Activated B cell treated with CpG ODN at 0.5 μM for 24 hours (primary cell): ENCODE measurements at regions of chr5 and their contacts with region 1.

Region 1: DNA sequence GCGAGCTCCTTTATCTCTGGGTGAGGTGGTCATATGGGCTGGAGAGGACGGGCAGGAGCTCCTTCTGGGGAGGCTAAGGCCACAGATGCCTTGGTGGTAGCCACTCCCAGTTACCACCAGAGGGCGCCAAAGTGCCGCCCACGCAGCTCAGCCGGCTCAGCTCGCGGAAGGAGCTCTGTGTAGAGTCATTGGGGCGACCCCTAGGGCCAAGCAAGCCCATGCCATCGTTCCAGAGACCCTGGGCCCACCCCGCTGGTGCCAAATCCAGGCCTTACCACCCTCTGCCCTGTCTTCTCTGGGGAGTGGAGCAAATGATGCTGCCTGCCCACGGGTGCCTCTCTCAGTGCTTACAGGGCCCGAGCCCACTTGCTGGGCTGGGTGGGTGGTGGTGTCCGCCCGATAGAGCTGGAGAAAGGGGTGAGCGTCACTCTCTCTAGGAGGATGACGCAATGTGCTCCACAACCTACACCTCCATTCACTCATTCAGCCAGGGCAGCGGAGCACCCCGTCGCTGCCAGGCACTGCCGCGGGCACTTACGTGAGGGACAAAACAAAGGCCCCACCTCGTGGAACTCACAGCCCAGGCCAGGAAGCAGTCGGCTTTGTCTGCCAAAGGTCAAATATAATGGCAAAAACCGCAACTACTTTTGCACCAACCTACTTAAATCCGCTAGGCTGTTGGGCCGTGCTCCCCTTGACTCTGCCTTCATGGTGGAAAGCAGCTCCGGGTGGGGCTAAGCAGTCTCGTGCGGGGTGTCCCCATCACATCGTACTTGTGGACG is 13.8 kb downstream of the TSPAN17 start:
- DNase-seq: peak; percentile 72
- ATAC-seq: peak; percentile 84
- H3K4me3 Mint-ChIP-seq: no peak overlapping the region
- H3K27ac Mint-ChIP-seq: no peak overlapping the region
- H3K4me1 Mint-ChIP-seq: peaks cover 29% of the 10 kb centered on the region
- H3K27me3 Mint-ChIP-seq: peaks cover 18% of the 10 kb centered on the region
- CTCF ChIP-seq: no peak

Region 2: DNA sequence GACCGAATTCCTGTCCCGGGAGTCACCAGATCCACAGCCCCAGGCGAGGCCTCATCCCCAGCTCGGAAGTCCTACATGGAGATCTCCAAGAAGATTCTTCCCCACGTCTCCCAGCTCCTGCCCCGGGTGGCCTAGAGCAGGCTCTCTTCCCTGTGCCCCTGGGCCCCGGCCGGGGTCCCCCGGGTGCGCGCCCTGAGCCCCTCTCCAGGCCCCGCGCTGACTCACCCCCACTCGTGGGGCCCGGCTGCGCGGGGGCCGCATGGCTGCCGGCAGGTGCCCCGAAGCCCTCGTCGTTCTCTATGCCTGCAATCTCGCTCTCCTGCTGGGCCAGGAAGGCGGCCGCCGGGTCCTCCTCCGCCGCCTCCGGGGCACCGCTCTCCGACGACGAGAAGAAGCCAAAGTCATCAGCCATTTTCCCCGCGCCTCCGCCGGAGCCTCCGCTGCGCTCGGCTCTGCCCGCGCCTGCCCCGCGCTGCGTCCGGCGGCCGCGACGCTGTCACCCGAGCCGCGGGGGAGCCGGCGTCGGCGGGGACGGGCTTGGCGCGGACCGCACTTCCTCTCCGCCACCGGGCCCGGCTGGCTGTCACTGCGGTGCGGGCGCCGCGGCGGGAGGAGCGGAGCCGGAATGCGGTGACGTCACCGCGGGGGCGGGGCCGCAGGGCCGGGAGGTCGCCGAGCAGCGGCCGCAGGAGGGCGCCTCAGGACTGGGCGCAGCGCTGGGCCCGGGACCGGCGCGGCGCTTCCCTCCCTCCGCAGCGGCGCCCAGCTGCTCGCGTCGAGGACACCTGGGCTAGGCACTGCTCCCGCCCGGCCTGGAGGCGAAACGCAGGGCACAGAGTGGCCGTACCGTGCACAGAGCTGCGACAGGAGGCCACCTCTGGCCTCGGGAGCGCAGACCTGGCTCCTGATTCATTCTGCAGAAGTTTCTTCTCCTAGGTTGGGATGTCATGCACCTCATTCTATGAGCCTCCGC is 244.8 kb before region 1 on chr5 and contains the start of gene CLTB:
- CTCF ChIA-PET with region 1: interaction called, 5 read pairs
- POLR2A ChIA-PET with region 1: no interaction called
- intact Hi-C with region 1: loop called (anchors 1 kb)
- DNase-seq: peak; percentile 80
- ATAC-seq: peak; percentile 97
- H3K4me3 Mint-ChIP-seq: peak within 1 kb of the TSS; percentile 80
- H3K27ac Mint-ChIP-seq: peak within 1 kb of the TSS; percentile 56
- H3K4me1 Mint-ChIP-seq: peaks cover 26% of the 10 kb centered on the region
- H3K27me3 Mint-ChIP-seq: peaks cover 8% of the 10 kb centered on the region
- CTCF ChIP-seq: no peak
- total RNA-seq, gene CLTB: 29.5 and 48.9 TPM in 2 replicates

Region 3: DNA sequence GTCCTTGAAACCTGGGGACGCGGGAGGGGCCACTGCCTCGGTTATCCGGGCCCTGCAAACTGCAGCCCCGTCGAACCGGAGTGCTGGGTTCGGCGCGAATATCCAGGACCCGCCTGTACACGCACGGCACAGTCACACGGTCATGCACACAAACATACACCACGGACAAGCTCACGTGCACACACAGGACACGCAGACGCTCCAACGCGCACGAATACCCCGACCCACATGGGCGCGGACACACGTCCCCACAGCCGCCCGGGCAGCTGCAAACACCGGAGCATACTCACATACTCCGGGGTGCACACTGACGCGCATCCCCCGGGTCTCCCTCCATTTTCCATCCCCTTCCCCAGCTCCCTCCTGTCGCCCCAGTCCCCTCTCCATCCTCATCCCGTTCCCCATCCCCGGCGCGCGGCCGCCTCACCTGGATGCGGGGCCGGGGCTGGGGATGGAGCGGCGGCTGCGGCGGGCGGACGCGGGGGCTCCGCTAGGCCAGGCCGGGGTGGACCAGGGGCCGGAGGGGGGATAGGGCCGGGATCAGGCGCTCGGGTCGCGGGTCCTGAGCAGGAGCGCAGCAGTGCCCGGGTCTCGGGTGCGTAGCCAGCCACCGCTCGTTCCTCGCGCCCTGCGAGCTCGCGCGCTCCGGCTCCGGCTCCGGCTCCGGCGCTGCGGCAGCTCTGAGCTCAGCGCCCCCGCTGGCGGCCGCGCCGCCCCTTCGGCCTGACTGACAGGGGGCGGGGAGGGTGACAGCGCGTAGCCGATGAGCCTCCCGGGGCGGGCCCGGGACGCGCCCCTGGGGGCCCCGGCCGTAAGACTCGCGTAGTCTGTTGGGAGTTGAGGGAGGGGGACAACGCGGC is 31.0 kb before region 1 on chr5 and contains the starts of genes EIF4E1B and SNCB:
- CTCF ChIA-PET with region 1: interaction called, 10 read pairs
- POLR2A ChIA-PET with region 1: interaction called, 6 read pairs
- intact Hi-C with region 1: no loop called
- DNase-seq: peak; percentile 69
- ATAC-seq: peak; percentile 97
- H3K4me3 Mint-ChIP-seq: peak within 1 kb of the TSS; percentile 77
- H3K27ac Mint-ChIP-seq: no peak within 1 kb of the TSS
- H3K4me1 Mint-ChIP-seq: peaks cover 51% of the 10 kb centered on the region
- H3K27me3 Mint-ChIP-seq: peaks cover 28% of the 10 kb centered on the region
- CTCF ChIP-seq: no peak
- total RNA-seq, gene EIF4E1B: not detected in 2 replicates
- total RNA-seq, gene SNCB: 0.17 TPM in 1 of 2 replicates, not detected in the other

Region 4: DNA sequence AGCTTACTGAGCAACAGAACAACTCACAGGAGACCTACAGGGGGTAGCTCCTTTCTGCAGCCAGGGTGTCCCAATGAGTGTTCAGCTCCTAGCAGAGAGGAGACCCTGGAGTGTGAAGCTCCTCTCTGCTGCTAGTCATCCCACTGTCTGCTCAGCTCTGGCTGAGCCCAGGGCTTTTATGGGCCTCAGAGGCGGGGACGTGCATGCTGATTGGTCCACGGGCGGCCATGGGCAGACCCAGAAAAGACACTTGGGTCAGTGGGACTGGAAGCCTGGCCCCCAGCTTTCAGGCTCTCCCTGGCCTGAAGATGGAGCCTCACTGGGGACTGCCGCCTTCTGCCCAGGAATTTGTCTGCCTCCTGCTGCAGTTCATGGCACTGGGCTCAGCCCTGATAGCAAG is 26.8 kb after region 1 on chr5:
- CTCF ChIA-PET with region 1: no interaction called
- POLR2A ChIA-PET with region 1: no interaction called
- intact Hi-C with region 1: no loop called
- DNase-seq: no peak
- ATAC-seq: no peak
- H3K4me3 Mint-ChIP-seq: no peak overlapping the region
- H3K27ac Mint-ChIP-seq: no peak overlapping the region
- H3K4me1 Mint-ChIP-seq: no peaks in the 10 kb centered on the region
- H3K27me3 Mint-ChIP-seq: peaks cover 52% of the 10 kb centered on the region
- CTCF ChIP-seq: no peak

Region 5: DNA sequence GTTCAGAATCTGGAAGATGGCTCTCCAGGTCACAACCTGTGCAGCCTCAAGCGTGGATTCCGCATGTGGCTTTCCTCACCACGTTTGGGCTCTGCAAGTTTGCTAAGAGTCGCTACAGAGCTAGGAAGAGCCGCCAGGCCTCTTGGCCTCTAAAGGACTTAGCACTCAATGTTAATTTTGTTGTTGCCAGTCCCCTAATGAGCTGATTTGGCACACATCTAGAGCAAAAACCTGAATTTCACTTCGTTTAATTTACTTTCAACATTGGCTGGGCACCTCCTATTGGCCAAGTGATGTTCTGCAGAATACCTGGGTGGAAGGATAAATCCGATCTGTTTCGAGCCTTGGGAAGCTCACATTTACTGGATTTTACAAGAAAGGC is 83.5 kb after region 1 on chr5:
- CTCF ChIA-PET with region 1: interaction called, 7 read pairs
- POLR2A ChIA-PET with region 1: no interaction called
- intact Hi-C with region 1: loop called (anchors 1 kb)
- DNase-seq: no peak
- ATAC-seq: no peak
- H3K4me3 Mint-ChIP-seq: no peak overlapping the region
- H3K27ac Mint-ChIP-seq: no peak overlapping the region
- H3K4me1 Mint-ChIP-seq: peaks cover 15% of the 10 kb centered on the region
- H3K27me3 Mint-ChIP-seq: peaks cover 70% of the 10 kb centered on the region
- CTCF ChIP-seq: no peak

Region 6: DNA sequence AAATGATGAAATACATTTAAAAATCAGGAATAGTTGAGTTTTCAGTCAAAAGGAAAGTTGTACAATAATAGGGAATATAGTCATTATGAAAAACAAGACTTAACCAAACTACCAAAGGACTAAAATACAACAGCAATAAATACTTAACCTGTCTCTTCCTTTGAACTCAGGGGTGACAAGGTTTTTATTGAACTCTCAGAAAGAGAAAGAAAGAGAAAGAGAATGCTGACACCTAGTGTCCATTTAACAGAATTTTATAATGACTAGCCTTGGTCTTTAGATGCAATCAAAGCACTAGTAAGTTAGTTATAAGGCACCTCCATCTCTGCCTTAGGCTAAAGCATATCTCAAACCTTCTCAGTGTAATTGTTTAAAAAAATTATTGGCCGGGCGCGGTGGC is 298.0 kb after region 1 on chr5:
- CTCF ChIA-PET with region 1: interaction called, 20 read pairs
- POLR2A ChIA-PET with region 1: no interaction called
- intact Hi-C with region 1: loop called (anchors 2 kb)
- DNase-seq: no peak
- ATAC-seq: peak; percentile 28
- H3K4me3 Mint-ChIP-seq: no peak overlapping the region
- H3K27ac Mint-ChIP-seq: no peak overlapping the region
- H3K4me1 Mint-ChIP-seq: no peaks in the 10 kb centered on the region
- H3K27me3 Mint-ChIP-seq: no peaks in the 10 kb centered on the region
- CTCF ChIP-seq: no peak